A549 (cell line): ENCODE measurements at regions of chr5 and their contacts with region 1.

Region 1: GRCh38 chr5:135059000-135059923 is 25.2 kb upstream of the PITX1 start:
- DNase-seq: no peak
- ATAC-seq: peak; percentile 28 to 57; a peak in 3 of 6 replicates
- H3K4me3 ChIP-seq: no peak overlapping the region
- H3K27ac ChIP-seq: no peak overlapping the region
- H3K4me1 ChIP-seq: no peaks in the 10 kb centered on the region
- CTCF ChIP-seq: 0 out of 3 replicates have a peak, but pooled peaks have one; percentile 17
- EP300 ChIP-seq: no peak
- POLR2A ChIP-seq: no peak
- RAD21 ChIP-seq: peak; percentile 25 to 36; a peak in 1 of 5 replicates

Region 2: GRCh38 chr5:135047347-135047904 is 11.8 kb before region 1 on chr5:
- CTCF ChIA-PET with region 1: interaction called, 12 read pairs
- POLR2A ChIA-PET with region 1: no interaction called
- DNase-seq: no peak
- ATAC-seq: no peak
- H3K4me3 ChIP-seq: no peak overlapping the region
- H3K27ac ChIP-seq: no peak overlapping the region
- H3K4me1 ChIP-seq: no peaks in the 10 kb centered on the region
- CTCF ChIP-seq: no peak
- EP300 ChIP-seq: no peak
- POLR2A ChIP-seq: no peak
- RAD21 ChIP-seq: no peak

Region 3: DNA sequence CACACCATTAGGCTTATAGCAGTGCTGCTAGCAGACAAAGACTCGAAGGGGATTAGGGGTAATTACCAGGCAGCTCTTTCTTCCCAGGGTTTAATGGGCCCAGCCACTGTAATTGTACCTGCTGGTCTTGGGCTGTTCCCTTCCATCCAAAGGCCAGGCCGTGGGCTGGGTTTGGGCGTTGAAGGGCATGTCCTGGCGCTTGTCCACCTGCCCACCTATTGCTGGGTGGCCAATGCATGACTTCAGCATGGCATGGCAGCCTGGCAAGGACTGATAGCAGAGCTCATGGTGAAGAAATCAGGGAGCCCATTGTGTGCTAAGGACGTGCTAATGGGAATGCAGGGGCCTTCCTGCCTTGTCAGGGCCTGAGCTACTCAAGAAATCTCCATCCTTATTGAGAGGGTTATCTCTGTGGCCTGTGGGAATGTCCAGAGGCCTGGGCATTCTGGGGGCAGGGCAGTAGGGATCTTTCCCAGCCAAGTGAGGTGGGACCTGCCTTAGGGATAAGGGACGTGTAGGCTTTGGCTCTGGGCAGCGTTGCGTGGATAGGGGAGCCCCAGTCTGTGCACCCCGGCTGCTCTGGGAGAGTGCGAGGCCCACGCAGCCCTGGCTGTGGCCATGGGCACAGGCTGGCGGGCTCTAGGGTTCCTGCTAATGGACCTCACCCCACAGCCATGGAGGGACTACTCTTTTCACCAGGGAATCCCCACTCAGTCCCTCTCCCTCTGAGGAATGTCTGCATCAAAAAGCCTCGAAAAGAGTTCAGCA is 90.9 kb after region 1 on chr5:
- CTCF ChIA-PET with region 1: no interaction called
- POLR2A ChIA-PET with region 1: no interaction called
- DNase-seq: no peak
- ATAC-seq: no peak
- H3K4me3 ChIP-seq: no peak overlapping the region
- H3K27ac ChIP-seq: no peak overlapping the region
- H3K4me1 ChIP-seq: peaks cover 6% of the 10 kb centered on the region; the same call in 1 of the 3 replicates
- CTCF ChIP-seq: no peak
- EP300 ChIP-seq: no peak
- POLR2A ChIP-seq: no peak
- RAD21 ChIP-seq: no peak